ENCODE measurements at regions of chr5 and their contacts with region 1.

Region 1: DNA sequence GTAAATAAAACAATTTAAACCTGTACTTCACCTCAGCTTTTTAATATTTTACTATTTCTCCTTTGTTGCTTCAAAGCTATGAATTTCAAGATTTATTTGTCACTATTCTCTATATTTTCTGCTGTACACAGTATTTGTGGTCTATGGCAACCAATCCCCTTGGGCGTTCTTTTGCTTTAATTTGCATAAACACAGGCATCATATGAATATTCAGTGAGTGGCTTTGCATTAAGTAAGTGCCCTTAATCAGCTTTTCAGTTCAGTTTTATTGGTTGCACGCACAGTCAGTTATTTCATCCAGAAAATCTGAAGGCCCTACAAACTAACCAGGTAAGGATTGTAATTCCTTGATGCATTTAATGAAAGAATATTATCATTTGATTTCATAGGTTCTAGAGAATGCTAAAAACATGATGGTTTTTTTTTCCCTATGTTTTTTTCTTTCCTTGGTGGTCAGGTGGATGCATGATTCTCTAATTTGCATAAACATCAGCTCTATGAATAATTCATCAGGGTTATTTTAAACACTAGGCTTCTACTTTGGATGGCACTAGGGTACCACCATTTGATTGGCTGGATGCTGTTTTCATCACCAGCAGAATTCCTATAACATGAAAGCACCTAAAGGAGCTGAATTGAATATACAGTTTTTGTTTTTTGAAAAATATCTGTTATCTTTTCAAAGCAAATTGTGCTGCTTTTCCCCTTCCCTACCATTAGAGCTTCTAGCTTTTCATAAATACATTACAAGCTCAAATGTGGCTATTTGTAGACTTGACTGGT is 249.2 kb upstream of the CCNH start:
- DNase-seq: no peak
- H3K4me3 ChIP-seq: no peak overlapping the region
- H3K27ac ChIP-seq: no peak overlapping the region
- H3K4me1 ChIP-seq: no peaks in the 10 kb centered on the region
- H3K27me3 ChIP-seq: no peaks in the 10 kb centered on the region
- CTCF ChIP-seq: no peak
- EP300 ChIP-seq: no peak
- POLR2A ChIP-seq: no peak

Region 2: GRCh38 chr5:87412630-87413342 is 249.2 kb before region 1 on chr5 and contains the start of gene CCNH:
- intact Hi-C with region 1: no loop called
- DNase-seq: peak; percentile 97 to 99 (median 97)
- H3K4me3 ChIP-seq: peak within 1 kb of the TSS; percentile 75
- H3K27ac ChIP-seq: peak within 1 kb of the TSS; percentile 95
- H3K4me1 ChIP-seq: no peaks in the 10 kb centered on the region
- H3K27me3 ChIP-seq: no peaks in the 10 kb centered on the region
- CTCF ChIP-seq: no peak
- EP300 ChIP-seq: peak; percentile 96
- POLR2A ChIP-seq: peak; percentile 96
- total RNA-seq, gene CCNH: 37.8 to 160 (median 49.0) TPM

Region 3: GRCh38 chr5:87570366-87570765 is 91.6 kb before region 1 on chr5:
- intact Hi-C with region 1: no loop called
- DNase-seq: no peak
- H3K4me3 ChIP-seq: no peak overlapping the region
- H3K27ac ChIP-seq: no peak overlapping the region
- H3K4me1 ChIP-seq: no peaks in the 10 kb centered on the region
- H3K27me3 ChIP-seq: no peaks in the 10 kb centered on the region
- CTCF ChIP-seq: no peak
- EP300 ChIP-seq: no peak
- POLR2A ChIP-seq: no peak

Region 4: GRCh38 chr5:87685991-87686390 is 24.0 kb after region 1 on chr5:
- intact Hi-C with region 1: loop called in 1 of 4 experiments (anchors 2 kb)
- DNase-seq: no peak
- H3K4me3 ChIP-seq: no peak overlapping the region
- H3K27ac ChIP-seq: no peak overlapping the region
- H3K4me1 ChIP-seq: no peaks in the 10 kb centered on the region
- H3K27me3 ChIP-seq: no peaks in the 10 kb centered on the region
- CTCF ChIP-seq: no peak
- EP300 ChIP-seq: no peak
- POLR2A ChIP-seq: no peak